H1 (cell line): ENCODE measurements at regions of chr7 and their contacts with region 1.

Region 1: GRCh38 chr7:22001345-22002004 is 55.8 kb upstream of the CDCA7L start:
- DNase-seq: no peak
- H3K4me3 ChIP-seq: no peak overlapping the region
- H3K27ac ChIP-seq: no peak overlapping the region
- H3K4me1 ChIP-seq: peaks cover 0 to 3% (median 0%) of the 10 kb centered on the region in 4 experiments; a peak in 1 of 7 replicates
- H3K27me3 ChIP-seq: peaks cover 0 to 2% (median 0%) of the 10 kb centered on the region in 4 experiments; a peak in 1 of 7 replicates
- CTCF ChIP-seq: peak in 2 of 3 experiments; percentile 50 to 59; a peak in 2 of 4 replicates
- EP300 ChIP-seq: no peak
- POLR2A ChIP-seq: no peak
- RAD21 ChIP-seq: peak; percentile 89 to 91

Region 2: GRCh38 chr7:21986096-21986495 is 15.4 kb before region 1 on chr7:
- CTCF ChIA-PET with region 1: interaction called, 10 read pairs
- POLR2A ChIA-PET with region 1: no interaction called
- DNase-seq: no peak
- H3K4me3 ChIP-seq: no peak overlapping the region
- H3K27ac ChIP-seq: no peak overlapping the region
- H3K4me1 ChIP-seq: no peaks in the 10 kb centered on the region
- H3K27me3 ChIP-seq: no peaks in the 10 kb centered on the region
- CTCF ChIP-seq: no peak
- EP300 ChIP-seq: no peak
- POLR2A ChIP-seq: no peak
- RAD21 ChIP-seq: no peak

Region 3: GRCh38 chr7:22016507-22016906 is 15.0 kb after region 1 on chr7:
- CTCF ChIA-PET with region 1: interaction called, 29 read pairs
- POLR2A ChIA-PET with region 1: no interaction called
- DNase-seq: no peak
- H3K4me3 ChIP-seq: no peak overlapping the region
- H3K27ac ChIP-seq: no peak overlapping the region
- H3K4me1 ChIP-seq: no peaks in the 10 kb centered on the region
- H3K27me3 ChIP-seq: no peaks in the 10 kb centered on the region; a peak in 1 of 7 replicates
- CTCF ChIP-seq: no peak
- EP300 ChIP-seq: no peak
- POLR2A ChIP-seq: no peak
- RAD21 ChIP-seq: no peak